Dendritic cell treated with granulocyte-macrophage colony-stimulating factor and Interleukin-4, amounts not matched to agents 40 ng/mL and 50 ng/mL, for 4 days (primary cell): ENCODE measurements at regions of chr3 and their contacts with region 1.

Region 1: DNA sequence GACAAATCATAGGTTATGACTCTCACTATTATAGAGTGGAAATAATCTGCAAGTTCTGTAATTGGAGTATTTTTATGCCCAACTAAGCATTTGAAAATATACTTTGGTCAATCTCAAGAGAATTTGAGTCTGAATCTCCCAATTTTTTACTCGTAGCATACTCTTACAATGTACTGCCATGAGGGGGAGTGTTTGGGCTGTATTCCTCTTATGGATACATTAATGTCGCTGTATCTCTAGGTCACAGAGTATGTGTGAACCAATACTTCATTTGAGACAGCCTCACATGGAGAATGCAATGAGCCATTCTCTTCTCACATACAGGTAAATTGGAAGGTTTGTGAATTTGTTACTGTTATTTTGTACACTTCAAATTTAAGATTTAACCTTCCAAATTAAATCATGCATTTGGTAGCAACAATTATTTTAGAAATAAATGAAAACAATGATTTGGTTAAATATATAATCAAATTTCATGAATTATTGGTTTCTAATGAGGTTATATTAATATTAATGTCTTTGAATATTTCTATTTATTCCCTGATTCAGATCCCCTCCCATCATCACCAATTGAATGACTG is 5.5 kb upstream of the CD200 start:
- H3K4me3 Mint-ChIP-seq: no peak overlapping the region
- H3K27ac Mint-ChIP-seq: no peak overlapping the region
- H3K4me1 Mint-ChIP-seq: peaks cover 4% of the 10 kb centered on the region
- H3K27me3 Mint-ChIP-seq: peaks cover 6% of the 10 kb centered on the region

Region 2: DNA sequence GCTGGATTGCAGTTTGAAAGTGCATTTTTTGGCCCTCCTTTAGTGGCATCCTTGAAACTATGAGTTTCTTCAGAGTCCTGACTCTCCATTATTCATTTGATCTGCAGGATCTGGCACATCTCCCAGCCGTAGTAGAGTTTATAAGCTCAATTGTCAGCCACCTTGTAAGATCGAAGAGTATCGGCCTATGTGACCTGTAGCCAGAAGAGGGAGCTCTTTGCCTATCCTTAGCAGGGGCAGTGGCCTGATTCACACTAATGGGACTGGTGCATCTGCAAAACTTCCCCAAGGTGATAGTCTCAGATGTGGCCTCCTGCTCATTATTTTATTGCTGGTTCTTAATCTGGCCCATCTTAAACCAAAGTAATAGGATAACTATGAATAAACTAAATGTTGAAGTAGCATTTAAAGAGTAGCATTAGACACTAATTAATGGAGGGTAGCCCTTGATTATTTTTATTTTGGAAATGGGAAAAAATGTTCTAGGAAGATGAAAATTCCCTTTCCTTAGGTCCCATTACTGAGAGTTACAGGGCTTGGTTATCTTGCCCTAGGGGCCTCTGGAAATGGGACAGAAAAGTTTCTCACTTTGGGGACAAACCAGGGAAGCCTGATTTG is 215.6 kb before region 1 on chr3:
- intact Hi-C with region 1: loop called (anchors 5 kb)
- H3K4me3 Mint-ChIP-seq: no peak overlapping the region
- H3K27ac Mint-ChIP-seq: no peak overlapping the region
- H3K4me1 Mint-ChIP-seq: peaks cover 8% of the 10 kb centered on the region
- H3K27me3 Mint-ChIP-seq: peaks cover 14% of the 10 kb centered on the region

Region 3: GRCh38 chr3:112437146-112438022 is 109.9 kb after region 1 on chr3:
- intact Hi-C with region 1: loop called (anchors 2 kb)
- H3K4me3 Mint-ChIP-seq: no peak overlapping the region
- H3K27ac Mint-ChIP-seq: no peak overlapping the region
- H3K4me1 Mint-ChIP-seq: no peaks in the 10 kb centered on the region
- H3K27me3 Mint-ChIP-seq: no peaks in the 10 kb centered on the region